ENCODE measurements at regions of chr2 and their contacts with region 1.

Region 1: GRCh38 chr2:47414682-47415458 is 11.9 kb downstream of the MSH2 start:
- DNase-seq: no peak
- ATAC-seq: no peak; the same call in 1 of the 3 replicates
- H3K4me3 ChIP-seq: no peak overlapping the region
- H3K27ac ChIP-seq: no peak overlapping the region
- H3K4me1 ChIP-seq: no peaks in the 10 kb centered on the region
- H3K27me3 ChIP-seq: no peaks in the 10 kb centered on the region
- CTCF ChIP-seq: no peak
- EP300 ChIP-seq: no peak
- POLR2A ChIP-seq: no peak
- RAD21 ChIP-seq: no peak

Region 2: GRCh38 chr2:47155091-47155876 is 259.6 kb before region 1 on chr2 and contains the start of gene STPG4:
- CTCF ChIA-PET with region 1: no interaction called
- POLR2A ChIA-PET with region 1: no interaction called
- in situ Hi-C with region 1: no loop called
- intact Hi-C with region 1: no loop called
- DNase-seq: no peak
- ATAC-seq: peak; percentile 49
- H3K4me3 ChIP-seq: no peak within 1 kb of the TSS
- H3K27ac ChIP-seq: peak within 1 kb of the TSS; percentile 4
- H3K4me1 ChIP-seq: peaks cover 10% of the 10 kb centered on the region
- H3K27me3 ChIP-seq: no peaks in the 10 kb centered on the region
- CTCF ChIP-seq: no peak
- EP300 ChIP-seq: no peak
- POLR2A ChIP-seq: no peak
- RAD21 ChIP-seq: no peak
- total RNA-seq, gene STPG4: 0.15 TPM in 2 replicates

Region 3: GRCh38 chr2:47357483-47357882 is 57.4 kb before region 1 on chr2:
- CTCF ChIA-PET with region 1: no interaction called
- POLR2A ChIA-PET with region 1: no interaction called
- in situ Hi-C with region 1: no loop called
- intact Hi-C with region 1: no loop called
- DNase-seq: peak; percentile 51
- ATAC-seq: no peak
- H3K4me3 ChIP-seq: no peak overlapping the region
- H3K27ac ChIP-seq: no peak overlapping the region
- H3K4me1 ChIP-seq: peaks cover 78% of the 10 kb centered on the region
- H3K27me3 ChIP-seq: no peaks in the 10 kb centered on the region
- CTCF ChIP-seq: no peak
- EP300 ChIP-seq: no peak
- POLR2A ChIP-seq: no peak
- RAD21 ChIP-seq: no peak

Region 4: DNA sequence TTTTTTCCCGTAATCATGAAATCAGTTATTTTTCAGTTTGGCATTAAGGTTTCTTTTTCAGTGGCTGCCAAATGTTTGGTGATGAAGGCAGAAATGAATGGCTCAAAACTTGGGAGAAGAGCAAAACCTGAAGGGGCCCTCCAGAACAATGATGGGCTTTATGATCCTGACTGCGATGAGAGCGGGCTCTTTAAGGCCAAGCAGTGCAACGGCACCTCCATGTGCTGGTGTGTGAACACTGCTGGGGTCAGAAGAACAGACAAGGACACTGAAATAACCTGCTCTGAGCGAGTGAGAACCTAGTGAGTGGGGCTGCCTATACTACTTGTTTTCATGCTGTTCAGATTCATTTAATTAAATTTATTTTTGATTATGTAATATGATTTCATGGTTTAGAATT is 41.1 kb before region 1 on chr2:
- CTCF ChIA-PET with region 1: no interaction called
- POLR2A ChIA-PET with region 1: no interaction called
- in situ Hi-C with region 1: no loop called
- intact Hi-C with region 1: no loop called
- DNase-seq: peak; percentile 83
- ATAC-seq: peak; percentile 84
- H3K4me3 ChIP-seq: no peak overlapping the region
- H3K27ac ChIP-seq: no peak overlapping the region
- H3K4me1 ChIP-seq: peaks cover 44% of the 10 kb centered on the region
- H3K27me3 ChIP-seq: no peaks in the 10 kb centered on the region
- CTCF ChIP-seq: peak; percentile 94
- EP300 ChIP-seq: no peak
- POLR2A ChIP-seq: no peak
- RAD21 ChIP-seq: peak; percentile 95

Region 5: GRCh38 chr2:47486841-47487497 is 72.1 kb after region 1 on chr2:
- CTCF ChIA-PET with region 1: no interaction called
- POLR2A ChIA-PET with region 1: no interaction called
- in situ Hi-C with region 1: no loop called
- intact Hi-C with region 1: loop called (anchors 1 kb)
- DNase-seq: no peak
- ATAC-seq: no peak
- H3K4me3 ChIP-seq: no peak overlapping the region
- H3K27ac ChIP-seq: no peak overlapping the region
- H3K4me1 ChIP-seq: no peaks in the 10 kb centered on the region
- H3K27me3 ChIP-seq: no peaks in the 10 kb centered on the region
- CTCF ChIP-seq: no peak
- EP300 ChIP-seq: no peak
- POLR2A ChIP-seq: no peak
- RAD21 ChIP-seq: no peak

Region 6: DNA sequence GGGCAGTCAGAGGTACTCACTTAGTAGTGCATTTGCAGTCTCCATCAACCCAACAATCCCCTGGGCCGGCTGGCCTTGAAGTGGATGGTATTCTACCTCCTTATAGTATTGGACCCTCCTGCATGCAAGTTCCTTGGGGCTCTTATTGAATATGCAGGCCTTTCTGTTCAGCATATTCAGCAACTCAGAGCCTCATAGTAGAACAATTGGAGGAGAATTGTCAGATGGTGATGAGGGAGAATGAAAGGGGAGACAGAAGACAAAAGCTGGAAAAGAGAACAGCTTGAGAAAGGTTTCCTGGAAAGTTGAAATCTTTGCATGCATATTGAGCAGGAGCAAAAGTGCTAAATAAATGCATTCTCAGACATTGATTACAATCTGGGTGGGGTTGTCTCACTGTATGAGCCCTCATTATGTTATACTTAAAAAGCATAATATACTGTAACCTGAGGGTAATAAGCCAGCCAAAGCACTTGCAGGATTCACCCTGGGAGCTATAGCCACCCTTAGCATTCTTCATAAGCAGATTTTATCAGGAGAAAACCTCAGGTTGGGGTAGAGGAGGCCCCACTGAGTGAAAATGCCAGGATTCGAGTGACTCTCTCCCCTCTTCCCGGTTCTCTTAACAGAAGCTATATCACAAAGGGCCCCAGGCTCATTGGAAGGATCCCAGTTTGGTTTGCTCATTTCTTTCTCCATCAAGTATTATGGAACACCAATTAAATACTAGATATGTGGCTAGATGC is 166.2 kb after region 1 on chr2:
- CTCF ChIA-PET with region 1: no interaction called
- POLR2A ChIA-PET with region 1: no interaction called
- in situ Hi-C with region 1: no loop called
- intact Hi-C with region 1: no loop called
- DNase-seq: no peak
- ATAC-seq: no peak
- H3K4me3 ChIP-seq: no peak overlapping the region
- H3K27ac ChIP-seq: no peak overlapping the region
- H3K4me1 ChIP-seq: no peaks in the 10 kb centered on the region
- H3K27me3 ChIP-seq: peaks cover 0 to 13% of the 10 kb centered on the region in 2 experiments; a peak in 2 of 5 replicates
- CTCF ChIP-seq: no peak
- EP300 ChIP-seq: no peak
- POLR2A ChIP-seq: no peak
- RAD21 ChIP-seq: no peak